Activated T-helper 2 cell treated with anti-CD3 and anti-CD28 coated beads, Interferon-gamma antibody, Interleukin-2, Interleukin-4, amounts not matched to agents 10 μg/mL and 5 μg/mL and 100 μg/mL, durations not matched to agents 14 hours and 24 hours and 36 hours (primary cell): ENCODE measurements at regions of chr3 and their contacts with region 1.

Region 1: GRCh38 chr3:37243820-37244748 is 69.7 kb upstream of the LRRFIP2 start:
- DNase-seq: peak; percentile 23
- H3K4me3 Mint-ChIP-seq: peak overlapping the region; percentile 96
- H3K27ac Mint-ChIP-seq: peak overlapping the region; percentile 97
- H3K4me1 Mint-ChIP-seq: peaks cover 30% of the 10 kb centered on the region
- H3K27me3 Mint-ChIP-seq: no peaks in the 10 kb centered on the region

Region 2: DNA sequence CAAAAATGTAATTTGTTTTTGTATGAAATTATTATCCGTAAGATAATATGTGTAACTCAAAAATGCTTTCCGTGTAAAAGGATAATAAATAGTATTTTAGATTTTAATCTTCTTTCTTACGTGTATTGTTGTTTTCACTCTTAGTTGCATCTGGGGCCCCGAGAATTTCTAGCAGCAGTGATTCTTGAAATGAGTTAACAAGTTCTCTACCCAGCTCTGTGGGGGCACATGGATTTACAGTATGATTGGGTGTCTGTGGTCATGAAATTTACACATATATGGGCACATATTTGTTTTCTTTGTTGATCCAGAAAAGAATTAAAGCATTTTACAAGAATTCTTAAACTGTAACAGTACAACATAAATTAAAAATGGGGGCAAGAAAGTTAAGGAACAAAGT is 76.2 kb after region 1 on chr3:
- intact Hi-C with region 1: loop called (anchors 2 kb)
- DNase-seq: no peak
- H3K4me3 Mint-ChIP-seq: no peak overlapping the region
- H3K27ac Mint-ChIP-seq: peak overlapping the region; percentile 74
- H3K4me1 Mint-ChIP-seq: peaks cover 17% of the 10 kb centered on the region
- H3K27me3 Mint-ChIP-seq: no peaks in the 10 kb centered on the region

Region 3: DNA sequence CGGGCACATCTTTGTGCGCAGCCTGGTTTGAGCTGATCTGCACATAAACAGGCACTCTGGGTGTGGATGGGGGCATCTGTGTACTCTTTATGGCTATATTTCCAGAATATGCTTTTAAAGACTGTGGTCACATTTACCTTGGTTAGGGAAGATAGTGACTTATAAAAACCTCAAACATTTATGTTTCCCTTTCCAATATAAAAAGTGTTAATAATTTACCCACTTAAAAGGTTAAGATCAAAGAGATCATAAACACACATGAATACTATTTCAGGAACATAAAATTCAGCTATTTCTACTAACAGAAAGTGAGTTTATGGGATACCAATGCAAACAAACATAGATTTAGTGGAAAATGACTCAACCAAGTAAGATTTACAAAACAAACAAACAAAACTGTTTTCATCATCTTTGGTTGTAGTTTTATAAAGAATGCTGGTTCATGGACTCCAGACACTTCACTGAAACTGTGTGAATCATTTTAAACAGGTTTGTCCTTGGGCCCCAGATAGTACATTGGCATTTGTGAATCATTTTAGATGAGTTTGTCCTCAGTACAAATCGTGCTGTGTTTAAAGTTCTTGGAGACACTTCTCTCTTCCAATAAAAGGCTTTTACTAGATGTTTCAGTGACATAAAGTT is 364.1 kb after region 1 on chr3:
- intact Hi-C with region 1: no loop called
- DNase-seq: no peak
- H3K4me3 Mint-ChIP-seq: no peak overlapping the region
- H3K27ac Mint-ChIP-seq: no peak overlapping the region
- H3K4me1 Mint-ChIP-seq: no peaks in the 10 kb centered on the region
- H3K27me3 Mint-ChIP-seq: no peaks in the 10 kb centered on the region